ENCODE measurements at regions of chr18 and their contacts with region 1.

Region 1: DNA sequence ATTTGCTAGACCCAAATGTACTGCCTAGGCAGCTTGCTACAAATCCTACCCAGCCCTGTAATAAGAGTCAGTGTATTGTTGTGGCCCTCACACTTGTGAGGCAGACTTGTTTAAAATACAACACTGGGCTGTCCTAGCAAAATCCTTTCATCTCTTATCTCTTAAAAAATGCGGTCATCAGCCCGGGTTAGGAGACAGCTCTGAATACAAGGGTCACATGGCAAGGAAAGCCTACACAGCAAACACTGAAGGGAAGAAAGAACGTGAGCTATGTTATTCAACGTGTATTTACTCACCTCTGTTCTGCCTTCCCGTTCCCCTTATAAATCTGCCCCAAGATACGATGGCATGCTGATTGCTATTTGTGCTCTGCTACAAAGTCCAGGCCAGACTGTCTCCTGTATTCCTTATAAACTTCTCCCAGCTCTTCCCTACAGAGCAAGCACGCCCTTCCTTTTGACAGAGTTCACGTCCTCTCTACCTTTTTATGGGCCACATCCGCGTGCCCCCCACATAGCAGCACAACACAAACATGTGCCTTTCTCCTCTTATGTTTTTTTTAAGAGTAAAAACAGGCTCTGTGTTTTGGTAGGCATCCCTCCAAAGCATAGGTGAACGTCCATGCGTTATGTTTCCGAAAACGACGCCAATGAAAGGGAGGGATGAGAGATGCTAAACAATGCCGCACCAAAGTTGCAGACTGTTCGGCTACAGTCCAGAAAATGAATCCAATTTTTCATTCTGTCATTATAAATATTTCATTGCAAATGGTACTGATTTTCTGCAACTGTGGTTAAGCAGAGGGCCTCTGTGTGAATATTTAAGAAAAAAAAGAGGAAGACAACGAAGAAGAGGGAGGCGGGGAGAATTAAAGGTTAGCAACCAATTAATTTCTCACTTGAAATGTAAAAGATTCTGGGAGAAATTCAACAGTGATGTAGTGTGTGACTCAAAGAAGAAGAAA is 274.7 kb downstream of the ZNF521 start:
- DNase-seq: no peak
- H3K4me3 ChIP-seq: no peak overlapping the region
- H3K27ac ChIP-seq: peak overlapping the region in 1 of 59 donors; percentile 69
- H3K27me3 ChIP-seq: no peaks in the 10 kb centered on the region
- CTCF ChIP-seq: no peak

Region 2: GRCh38 chr18:24885276-24885675 is 192.0 kb before region 1 on chr18:
- intact Hi-C with region 1: loop called in 1 of 2 experiments (anchors 10 kb)
- DNase-seq: no peak
- H3K4me3 ChIP-seq: no peak overlapping the region
- H3K27ac ChIP-seq: no peak overlapping the region
- H3K27me3 ChIP-seq: no peaks in the 10 kb centered on the region
- CTCF ChIP-seq: no peak